GM13976 (cell line): ENCODE measurements at regions of chr12 and their contacts with region 1.

Region 1: GRCh38 chr12:113422030-113422885 is at the start of gene SDSL:
- DNase-seq: peak; percentile 67
- CTCF ChIP-seq: no peak

Region 2: DNA sequence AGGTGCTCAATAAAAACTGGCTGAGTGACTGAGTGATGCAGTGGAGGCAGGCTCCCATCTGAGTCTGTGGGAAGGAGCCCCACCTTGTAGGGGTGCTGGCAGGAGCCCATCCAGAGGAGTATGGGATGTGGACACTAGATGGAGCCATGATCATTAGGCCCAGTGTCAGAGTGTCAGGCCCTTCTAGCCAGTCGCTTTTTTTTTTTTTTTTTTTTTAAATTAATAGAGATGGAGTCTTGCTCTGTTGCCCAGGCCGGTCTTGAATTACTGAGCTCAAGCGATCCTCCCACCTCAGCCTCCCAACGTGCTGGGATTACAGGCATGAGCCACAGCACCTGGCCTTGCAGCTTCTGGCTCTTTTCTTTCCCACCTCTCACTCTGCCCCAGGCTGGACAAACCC is 225.3 kb before region 1 on chr12:
- in situ Hi-C with region 1: loop called (anchors 10 kb)
- DNase-seq: peak; percentile 90
- CTCF ChIP-seq: peak; percentile 61